ENCODE measurements at regions of chr9 and their contacts with region 1.

Region 1: GRCh38 chr9:117555964-117556629 is 141.2 kb upstream of the ASTN2 start:
- DNase-seq: peak; percentile 70
- ATAC-seq: peak; percentile 61
- H3K4me3 Mint-ChIP-seq: no peak overlapping the region
- H3K27ac Mint-ChIP-seq: no peak overlapping the region
- H3K4me1 Mint-ChIP-seq: no peaks in the 10 kb centered on the region
- H3K27me3 Mint-ChIP-seq: peaks cover 6% of the 10 kb centered on the region

Region 2: GRCh38 chr9:117487555-117488175 is 68.4 kb before region 1 on chr9:
- CTCF ChIA-PET with region 1: no interaction called
- POLR2A ChIA-PET with region 1: no interaction called
- intact Hi-C with region 1: loop called in 1 of 2 experiments (anchors 1 kb)
- DNase-seq: peak; percentile 65
- ATAC-seq: peak; percentile 74
- H3K4me3 Mint-ChIP-seq: no peak overlapping the region
- H3K27ac Mint-ChIP-seq: no peak overlapping the region
- H3K4me1 Mint-ChIP-seq: no peaks in the 10 kb centered on the region
- H3K27me3 Mint-ChIP-seq: peaks cover 10% of the 10 kb centered on the region

Measured in activated CD4-positive, alpha-beta T cell treated with anti-CD3 and anti-CD28 coated beads for 36 hours (primary cell).